ENCODE measurements at regions of chr2 and their contacts with region 1.

Region 1: GRCh38 chr2:26429779-26430578 is 28.3 kb downstream of the DRC1 start:
- DNase-seq: peak in 1 of 2 donors; percentile 64
- ATAC-seq: peak in 3 of 4 donors; percentile 78 to 95 (median 87)
- H3K4me3 ChIP-seq: no peak overlapping the region
- H3K27ac ChIP-seq: no peak overlapping the region
- H3K4me1 ChIP-seq: no peaks in the 10 kb centered on the region
- H3K27me3 ChIP-seq: no peaks in the 10 kb centered on the region
- CTCF ChIP-seq: no peak

Region 2: GRCh38 chr2:24863641-24864040 is 1566.3 kb before region 1 on chr2:
- intact Hi-C with region 1: loop called in 1 of 2 experiments (anchors 10 kb)
- DNase-seq: no peak
- ATAC-seq: no peak
- H3K4me3 ChIP-seq: no peak overlapping the region
- H3K27ac ChIP-seq: no peak overlapping the region
- H3K4me1 ChIP-seq: no peaks in the 10 kb centered on the region
- H3K27me3 ChIP-seq: no peaks in the 10 kb centered on the region
- CTCF ChIP-seq: no peak

Region 3: DNA sequence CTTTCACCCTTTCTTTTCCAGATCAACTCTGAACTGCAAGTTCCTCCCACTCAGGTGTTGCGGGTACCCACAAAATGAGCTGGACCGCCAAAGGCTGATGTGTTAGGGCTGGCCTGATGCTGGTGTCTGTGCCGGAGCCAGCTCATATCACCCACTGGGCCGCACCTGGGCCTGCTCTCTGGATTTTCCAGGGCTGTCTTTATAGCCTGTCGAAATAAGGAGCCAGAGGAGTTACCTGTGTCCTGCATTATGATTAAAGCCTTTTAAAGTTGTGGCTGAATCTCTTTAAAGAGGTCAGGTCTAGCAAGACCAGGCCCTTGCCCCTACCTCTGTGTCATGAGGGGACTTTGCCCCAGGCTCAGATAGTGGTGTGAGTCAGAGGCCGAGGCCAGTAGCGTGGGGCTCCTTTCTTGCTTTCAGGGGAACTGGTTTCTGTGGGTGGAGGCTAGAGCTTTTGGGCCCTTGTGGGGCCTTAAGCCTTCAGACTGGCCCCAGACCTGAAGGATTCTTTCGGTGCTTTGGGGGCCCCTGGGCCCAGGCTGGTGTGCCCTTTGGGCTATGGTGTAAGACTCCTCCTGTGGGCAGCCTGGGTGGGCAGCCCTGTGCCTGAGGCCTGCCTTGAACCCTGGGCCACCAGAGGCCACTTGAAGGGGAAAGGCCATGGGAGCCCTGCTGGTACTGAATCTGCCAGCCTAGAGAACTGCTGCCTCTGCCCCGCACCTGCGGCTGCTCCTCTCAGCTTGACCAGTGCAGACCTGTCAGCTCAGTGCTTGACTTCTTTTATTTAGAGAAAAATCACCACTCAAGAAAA is 26.7 kb after region 1 on chr2:
- intact Hi-C with region 1: no loop called
- DNase-seq: no peak
- ATAC-seq: no peak
- H3K4me3 ChIP-seq: no peak overlapping the region
- H3K27ac ChIP-seq: no peak overlapping the region
- H3K4me1 ChIP-seq: no peaks in the 10 kb centered on the region
- H3K27me3 ChIP-seq: no peaks in the 10 kb centered on the region
- CTCF ChIP-seq: no peak